ENCODE measurements at regions of chr1 and their contacts with region 1.

Region 1: DNA sequence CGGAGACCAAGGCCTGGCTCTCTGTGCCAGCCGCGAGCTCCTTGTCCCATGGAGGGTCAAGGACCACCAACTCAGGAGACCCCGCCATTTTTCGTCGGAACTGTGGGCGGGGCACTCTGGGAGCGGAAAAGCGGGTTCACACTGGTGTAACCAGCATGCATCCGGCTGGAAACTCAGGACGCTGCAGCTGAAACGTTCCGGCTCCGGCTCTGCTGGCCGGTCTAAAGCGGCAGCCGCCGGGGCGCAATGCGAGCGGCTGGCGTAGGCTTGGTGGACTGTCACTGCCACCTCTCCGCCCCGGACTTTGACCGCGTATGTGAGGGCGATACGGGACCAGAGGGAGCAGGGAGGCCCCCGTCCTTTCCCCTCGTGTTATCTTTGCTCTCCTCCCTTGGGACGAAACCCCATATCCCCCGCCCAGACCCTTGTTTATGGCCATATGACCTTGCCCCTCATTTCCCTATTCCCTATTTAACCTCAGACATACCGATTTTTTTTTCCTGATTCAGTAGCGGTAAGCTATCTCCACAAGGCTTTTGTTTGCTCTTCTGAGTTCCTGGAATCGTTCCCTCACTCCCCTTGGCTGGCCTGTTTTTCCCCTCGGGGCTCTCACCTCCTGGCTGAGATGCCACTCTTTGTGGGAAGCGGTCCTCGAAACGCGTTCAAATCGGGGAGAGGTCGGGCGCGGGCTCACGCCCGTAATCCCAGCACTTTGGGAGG is at the starts of genes NSL1 and TATDN3:
- DNase-seq: peak; percentile 97
- ATAC-seq: peak; percentile 72
- H3K4me3 ChIP-seq: peak within 1 kb of the TSS; percentile 77 to 93 (median 83)
- H3K4me3 Mint-ChIP-seq: peak within 1 kb of the TSS; percentile 93
- H3K27ac ChIP-seq: peak within 1 kb of the TSS; percentile 91 to 92
- H3K27ac Mint-ChIP-seq: peak within 1 kb of the TSS; percentile 93
- H3K4me1 ChIP-seq: peaks cover 39 to 61% of the 10 kb centered on the region in 2 donors
- H3K4me1 Mint-ChIP-seq: peaks cover 46% of the 10 kb centered on the region
- H3K27me3 ChIP-seq: no peaks in the 10 kb centered on the region
- H3K27me3 Mint-ChIP-seq: no peaks in the 10 kb centered on the region
- CTCF ChIP-seq: no peak
- total RNA-seq, gene NSL1: 45.9 and 50.6 TPM in 2 replicates
- total RNA-seq, gene TATDN3: 28.6 and 30.7 TPM in 2 replicates

Region 2: GRCh38 chr1:212269306-212269705 is 522.5 kb before region 1 on chr1:
- CTCF ChIA-PET with region 1: no interaction called
- POLR2A ChIA-PET with region 1: no interaction called
- intact Hi-C with region 1: no loop called
- DNase-seq: no peak
- ATAC-seq: no peak
- H3K4me3 ChIP-seq: no peak overlapping the region
- H3K4me3 Mint-ChIP-seq: no peak overlapping the region
- H3K27ac ChIP-seq: no peak overlapping the region
- H3K27ac Mint-ChIP-seq: no peak overlapping the region
- H3K4me1 ChIP-seq: peaks cover 7% of the 10 kb centered on the region in 2 donors
- H3K4me1 Mint-ChIP-seq: peaks cover 8% of the 10 kb centered on the region
- H3K27me3 ChIP-seq: no peaks in the 10 kb centered on the region
- H3K27me3 Mint-ChIP-seq: peaks cover 4% of the 10 kb centered on the region
- CTCF ChIP-seq: no peak

Region 3: GRCh38 chr1:212414328-212415106 is 377.3 kb before region 1 on chr1 and contains the start of gene PACC1:
- CTCF ChIA-PET with region 1: no interaction called
- POLR2A ChIA-PET with region 1: no interaction called
- intact Hi-C with region 1: loop called (anchors 1 kb)
- DNase-seq: peak; percentile 98
- ATAC-seq: peak; percentile 98
- H3K4me3 ChIP-seq: peak within 1 kb of the TSS; percentile 64 to 93 (median 83)
- H3K4me3 Mint-ChIP-seq: peak within 1 kb of the TSS; percentile 99
- H3K27ac ChIP-seq: peak within 1 kb of the TSS; percentile 83 to 84
- H3K27ac Mint-ChIP-seq: peak within 1 kb of the TSS; percentile 86
- H3K4me1 ChIP-seq: peaks cover 24 to 35% of the 10 kb centered on the region in 2 donors
- H3K4me1 Mint-ChIP-seq: peaks cover 39% of the 10 kb centered on the region
- H3K27me3 ChIP-seq: no peaks in the 10 kb centered on the region
- H3K27me3 Mint-ChIP-seq: no peaks in the 10 kb centered on the region
- CTCF ChIP-seq: no peak
- total RNA-seq, gene PACC1: 16.7 and 18.3 TPM in 2 replicates

Region 4: GRCh38 chr1:212608209-212608955 is 183.5 kb before region 1 on chr1 and contains the start of gene ATF3:
- CTCF ChIA-PET with region 1: no interaction called
- POLR2A ChIA-PET with region 1: interaction called, 3 read pairs
- intact Hi-C with region 1: loop called (anchors 5 kb)
- DNase-seq: peak; percentile 91
- ATAC-seq: peak; percentile 80
- H3K4me3 ChIP-seq: peak within 1 kb of the TSS; percentile 53 to 76 (median 72)
- H3K4me3 Mint-ChIP-seq: peak within 1 kb of the TSS; percentile 97
- H3K27ac ChIP-seq: peak within 1 kb of the TSS in 1 of 2 donors; percentile 54
- H3K27ac Mint-ChIP-seq: peak within 1 kb of the TSS; percentile 87
- H3K4me1 ChIP-seq: peaks cover 28 to 32% of the 10 kb centered on the region in 2 donors
- H3K4me1 Mint-ChIP-seq: peaks cover 28% of the 10 kb centered on the region
- H3K27me3 ChIP-seq: peaks cover 0 to 63% (median 36%) of the 10 kb centered on the region in 4 experiments
- H3K27me3 Mint-ChIP-seq: peaks cover 52% of the 10 kb centered on the region
- CTCF ChIP-seq: no peak
- total RNA-seq, gene ATF3: 2.7 and 4.5 TPM in 2 replicates

Region 5: GRCh38 chr1:212749821-212750535 is 41.9 kb before region 1 on chr1:
- CTCF ChIA-PET with region 1: no interaction called
- POLR2A ChIA-PET with region 1: interaction called, 3 read pairs
- intact Hi-C with region 1: loop called (anchors 5 kb)
- DNase-seq: peak; percentile 42
- ATAC-seq: peak; percentile 34
- H3K4me3 ChIP-seq: no peak overlapping the region
- H3K4me3 Mint-ChIP-seq: peak overlapping the region; percentile 0
- H3K27ac ChIP-seq: peak overlapping the region in 1 of 2 donors; percentile 80
- H3K27ac Mint-ChIP-seq: peak overlapping the region; percentile 15
- H3K4me1 ChIP-seq: peaks cover 34 to 39% of the 10 kb centered on the region in 2 donors
- H3K4me1 Mint-ChIP-seq: peaks cover 37% of the 10 kb centered on the region
- H3K27me3 ChIP-seq: no peaks in the 10 kb centered on the region
- H3K27me3 Mint-ChIP-seq: no peaks in the 10 kb centered on the region
- CTCF ChIP-seq: peak; percentile 62

Region 6: GRCh38 chr1:212884592-212884991 is 92.8 kb after region 1 on chr1:
- CTCF ChIA-PET with region 1: no interaction called
- POLR2A ChIA-PET with region 1: no interaction called
- intact Hi-C with region 1: no loop called
- DNase-seq: no peak
- ATAC-seq: no peak
- H3K4me3 ChIP-seq: no peak overlapping the region
- H3K4me3 Mint-ChIP-seq: no peak overlapping the region
- H3K27ac ChIP-seq: no peak overlapping the region
- H3K27ac Mint-ChIP-seq: no peak overlapping the region
- H3K4me1 ChIP-seq: no peaks in the 10 kb centered on the region
- H3K4me1 Mint-ChIP-seq: no peaks in the 10 kb centered on the region
- H3K27me3 ChIP-seq: no peaks in the 10 kb centered on the region
- H3K27me3 Mint-ChIP-seq: no peaks in the 10 kb centered on the region
- CTCF ChIP-seq: no peak

Region 7: GRCh38 chr1:212950243-212951125 is 158.6 kb after region 1 on chr1 and contains the start of gene VASH2:
- CTCF ChIA-PET with region 1: no interaction called
- POLR2A ChIA-PET with region 1: no interaction called
- intact Hi-C with region 1: loop called (anchors 1 kb)
- DNase-seq: peak; percentile 79
- ATAC-seq: peak; percentile 99
- H3K4me3 ChIP-seq: peak within 1 kb of the TSS; percentile 55 to 87 (median 56)
- H3K4me3 Mint-ChIP-seq: peak within 1 kb of the TSS; percentile 91
- H3K27ac ChIP-seq: no peak within 1 kb of the TSS
- H3K27ac Mint-ChIP-seq: no peak within 1 kb of the TSS
- H3K4me1 ChIP-seq: peaks cover 29 to 40% of the 10 kb centered on the region in 2 donors
- H3K4me1 Mint-ChIP-seq: peaks cover 26% of the 10 kb centered on the region
- H3K27me3 ChIP-seq: peaks cover 0 to 27% (median 7%) of the 10 kb centered on the region in 4 experiments
- H3K27me3 Mint-ChIP-seq: peaks cover 18% of the 10 kb centered on the region
- CTCF ChIP-seq: no peak
- total RNA-seq, gene VASH2: not detected in 2 replicates

Region 8: DNA sequence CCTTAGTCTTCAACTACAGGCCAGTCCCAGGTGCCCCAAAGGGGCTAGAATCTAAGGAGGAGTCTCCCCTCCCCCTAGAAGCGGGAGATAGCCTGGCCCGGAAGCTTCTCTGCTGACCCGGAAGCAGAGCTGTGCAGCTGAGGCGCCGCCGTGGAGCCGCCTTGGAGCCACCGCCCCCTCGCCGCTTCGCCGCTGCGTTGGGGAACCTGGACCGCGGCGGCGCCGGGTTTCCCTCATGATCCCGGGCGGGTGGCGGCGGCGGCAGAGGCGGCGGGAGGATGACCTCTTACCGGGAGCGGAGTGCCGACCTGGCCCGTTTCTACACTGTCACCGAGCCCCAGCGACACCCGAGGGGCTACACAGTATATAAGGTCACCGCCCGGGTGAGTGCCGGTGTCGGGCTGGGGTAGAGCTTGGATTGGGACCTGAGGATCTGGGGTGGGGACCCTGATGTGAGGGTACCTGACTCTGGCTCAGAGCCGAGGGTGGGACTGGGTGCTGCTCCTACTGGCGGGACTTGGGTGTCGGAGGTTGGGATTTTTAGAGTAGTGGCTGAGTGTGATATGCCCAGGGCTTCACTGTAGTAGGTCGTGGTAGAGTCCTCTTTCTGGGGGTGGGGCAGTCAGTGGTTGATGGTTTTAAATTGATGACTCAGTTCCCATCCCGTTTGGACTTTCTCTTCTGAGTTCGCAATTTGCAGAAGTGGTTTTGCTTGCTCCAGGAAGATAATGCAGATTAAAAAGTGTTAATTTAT is 259.5 kb after region 1 on chr1 and contains the start of gene RPS6KC1:
- CTCF ChIA-PET with region 1: interaction called, 3 read pairs
- POLR2A ChIA-PET with region 1: no interaction called
- intact Hi-C with region 1: loop called (anchors 1 kb)
- DNase-seq: peak; percentile 86
- ATAC-seq: peak; percentile 95
- H3K4me3 ChIP-seq: peak within 1 kb of the TSS; percentile 77 to 87 (median 82)
- H3K4me3 Mint-ChIP-seq: peak within 1 kb of the TSS; percentile 97
- H3K27ac ChIP-seq: peak within 1 kb of the TSS; percentile 69 to 71
- H3K27ac Mint-ChIP-seq: peak within 1 kb of the TSS; percentile 86
- H3K4me1 ChIP-seq: peaks cover 12 to 13% of the 10 kb centered on the region in 2 donors
- H3K4me1 Mint-ChIP-seq: peaks cover 22% of the 10 kb centered on the region
- H3K27me3 ChIP-seq: peaks cover 0 to 6% (median under 1%) of the 10 kb centered on the region in 4 experiments
- H3K27me3 Mint-ChIP-seq: peaks cover 18% of the 10 kb centered on the region
- CTCF ChIP-seq: no peak
- total RNA-seq, gene RPS6KC1: 19.0 and 19.8 TPM in 2 replicates